ENCODE measurements at regions of chr22 and their contacts with region 1.

Region 1: GRCh38 chr22:27775758-27776649 is 25.6 kb downstream of the MN1 start:
- DNase-seq: no peak
- H3K4me3 ChIP-seq: no peak overlapping the region
- H3K27ac ChIP-seq: no peak overlapping the region
- H3K4me1 ChIP-seq: no peaks in the 10 kb centered on the region
- H3K27me3 ChIP-seq: no peaks in the 10 kb centered on the region
- CTCF ChIP-seq: no peak

Region 2: DNA sequence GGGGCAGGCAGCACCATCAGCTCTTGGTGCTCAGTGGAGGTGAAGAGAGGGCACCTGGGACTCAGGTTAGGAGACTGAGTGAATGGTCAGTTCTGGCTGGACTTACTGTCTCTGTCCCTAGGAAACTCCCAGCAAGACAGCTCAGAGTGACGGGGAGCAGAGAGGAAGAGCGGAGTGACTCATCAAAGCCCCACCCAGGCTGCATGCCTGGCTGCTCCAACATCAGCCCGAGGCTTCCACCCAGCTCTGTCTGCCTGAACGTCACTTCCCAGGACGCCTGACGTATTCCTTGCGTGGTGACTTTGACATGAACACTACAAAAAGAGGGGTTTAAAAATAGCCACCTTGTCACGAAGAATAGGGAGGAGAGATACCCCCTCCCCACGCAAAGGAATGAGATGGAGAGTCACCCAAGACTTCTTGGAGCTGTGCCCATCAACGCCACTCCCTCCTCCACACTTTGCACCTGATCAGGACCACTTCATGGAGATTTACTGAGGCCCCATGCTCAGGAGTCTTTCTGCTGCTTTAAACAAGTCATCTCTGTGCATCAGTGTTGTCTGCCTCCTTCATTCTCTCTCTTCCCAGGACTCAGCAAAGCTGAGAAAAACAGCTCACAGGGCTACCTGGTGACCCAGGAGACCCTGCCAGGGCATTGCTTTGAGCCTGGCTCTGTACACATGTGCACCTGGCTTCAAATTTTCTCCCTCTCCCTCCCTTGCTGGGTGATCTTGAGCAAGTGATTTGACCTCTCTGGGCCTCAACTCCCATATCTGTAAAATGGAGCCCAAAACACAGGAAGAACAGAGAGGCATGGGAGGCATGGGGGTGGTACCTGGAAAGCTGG is 57.6 kb before region 1 on chr22:
- intact Hi-C with region 1: loop called (anchors 10 kb)
- DNase-seq: peak; percentile 56
- H3K4me3 ChIP-seq: no peak overlapping the region
- H3K27ac ChIP-seq: no peak overlapping the region
- H3K4me1 ChIP-seq: no peaks in the 10 kb centered on the region
- H3K27me3 ChIP-seq: no peaks in the 10 kb centered on the region
- CTCF ChIP-seq: no peak

Measured in colonic mucosa (tissue), 4 donors.